ENCODE measurements at regions of chr3 and their contacts with region 1.

Region 1: DNA sequence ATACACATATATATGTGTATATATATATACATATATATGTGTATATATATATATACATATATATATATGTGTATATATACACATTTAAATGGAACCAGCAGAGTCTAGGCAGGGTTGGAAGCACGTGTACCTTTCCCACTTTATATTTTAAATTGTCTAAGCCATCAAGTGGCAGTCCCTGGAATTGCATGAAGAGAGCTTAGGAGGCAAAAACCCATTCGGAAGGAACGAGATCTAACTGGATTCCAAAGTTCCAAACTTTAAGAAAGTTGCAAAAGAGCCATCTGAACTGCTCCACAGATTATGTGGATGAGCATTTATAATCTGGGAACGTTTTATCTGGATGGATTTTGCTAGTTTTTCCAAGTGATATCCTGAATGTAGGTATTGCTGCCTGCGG is 186.5 kb downstream of the FOXP1 start:
- DNase-seq: no peak
- H3K4me3 ChIP-seq: no peak overlapping the region
- H3K27me3 ChIP-seq: no peaks in the 10 kb centered on the region
- CTCF ChIP-seq: peak; percentile 60

Region 2: DNA sequence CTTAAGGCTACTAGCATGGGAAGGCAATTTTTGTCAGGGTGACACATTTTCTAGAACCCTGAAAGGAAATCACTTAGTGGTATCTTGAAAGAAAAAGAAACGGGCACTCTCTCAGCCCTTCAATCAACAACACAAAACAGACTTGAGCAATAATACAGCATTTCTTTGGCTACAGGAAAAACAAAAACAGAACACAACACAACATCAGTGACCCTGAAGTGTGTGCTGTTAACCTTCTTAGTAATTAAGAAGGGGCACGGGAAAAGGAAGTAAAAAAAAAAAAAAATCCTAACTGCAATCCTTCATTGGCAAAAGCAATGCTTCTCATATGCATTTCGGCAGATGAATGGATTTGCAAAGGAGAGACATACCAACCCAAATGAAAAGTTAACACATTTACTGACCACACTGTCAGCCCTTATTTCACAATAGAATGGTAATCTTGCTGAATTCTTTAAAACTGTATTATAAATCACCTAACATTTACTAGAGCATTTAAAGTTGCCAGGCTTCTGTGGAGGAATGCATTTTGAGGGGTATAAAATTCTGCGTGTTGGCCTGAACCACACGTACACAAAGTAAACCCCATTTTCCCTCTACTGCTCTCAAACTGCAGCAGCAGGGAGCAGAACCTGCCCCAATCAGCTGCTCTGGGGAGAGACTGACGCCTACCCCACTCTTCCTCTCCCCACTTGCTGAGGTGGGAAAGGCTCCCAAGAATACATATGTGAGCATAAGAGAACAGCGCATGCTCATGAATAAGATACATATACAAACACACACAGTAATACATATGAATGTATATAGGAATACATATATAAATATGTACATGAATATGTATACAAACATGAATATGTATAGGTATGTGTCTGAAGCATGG is 12.0 kb before region 1 on chr3:
- CTCF ChIA-PET with region 1: interaction called, 21 read pairs
- POLR2A ChIA-PET with region 1: no interaction called
- DNase-seq: no peak
- H3K4me3 ChIP-seq: no peak overlapping the region
- H3K27me3 ChIP-seq: no peaks in the 10 kb centered on the region
- CTCF ChIP-seq: no peak

Region 3: DNA sequence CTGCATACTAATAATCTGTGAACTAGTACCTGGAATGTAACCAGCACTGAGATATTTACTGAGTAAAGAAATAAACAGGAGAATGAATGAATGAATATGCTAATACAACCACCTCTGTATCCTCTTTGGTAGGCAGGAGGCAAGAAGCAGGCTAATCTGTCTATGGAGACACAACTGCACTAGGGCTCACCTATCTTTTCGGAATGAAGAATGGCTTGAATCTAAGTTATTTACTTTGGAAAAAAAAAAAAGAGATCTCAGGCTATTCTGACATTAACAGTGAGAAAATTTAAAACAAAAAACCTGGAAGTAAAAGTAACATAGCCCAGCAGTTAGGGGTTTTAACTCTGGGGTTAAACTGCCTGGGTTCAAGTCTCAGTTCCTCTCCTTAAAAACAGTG is 12.3 kb after region 1 on chr3:
- CTCF ChIA-PET with region 1: interaction called, 16 read pairs
- POLR2A ChIA-PET with region 1: no interaction called
- DNase-seq: no peak
- H3K4me3 ChIP-seq: no peak overlapping the region
- H3K27me3 ChIP-seq: no peaks in the 10 kb centered on the region
- CTCF ChIP-seq: no peak

Region 4: GRCh38 chr3:71416876-71417275 is 19.8 kb after region 1 on chr3:
- CTCF ChIA-PET with region 1: interaction called, 14 read pairs
- POLR2A ChIA-PET with region 1: no interaction called
- DNase-seq: no peak
- H3K4me3 ChIP-seq: no peak overlapping the region
- H3K27me3 ChIP-seq: no peaks in the 10 kb centered on the region
- CTCF ChIP-seq: no peak

Region 5: GRCh38 chr3:71423151-71423906 is 26.3 kb after region 1 on chr3:
- CTCF ChIA-PET with region 1: interaction called, 14 read pairs
- POLR2A ChIA-PET with region 1: no interaction called
- DNase-seq: no peak
- H3K4me3 ChIP-seq: no peak overlapping the region
- H3K27me3 ChIP-seq: no peaks in the 10 kb centered on the region
- CTCF ChIP-seq: no peak